Esophagus squamous epithelium (tissue), 5 donors: ENCODE measurements at regions of chr2 and their contacts with region 1.

Region 1: DNA sequence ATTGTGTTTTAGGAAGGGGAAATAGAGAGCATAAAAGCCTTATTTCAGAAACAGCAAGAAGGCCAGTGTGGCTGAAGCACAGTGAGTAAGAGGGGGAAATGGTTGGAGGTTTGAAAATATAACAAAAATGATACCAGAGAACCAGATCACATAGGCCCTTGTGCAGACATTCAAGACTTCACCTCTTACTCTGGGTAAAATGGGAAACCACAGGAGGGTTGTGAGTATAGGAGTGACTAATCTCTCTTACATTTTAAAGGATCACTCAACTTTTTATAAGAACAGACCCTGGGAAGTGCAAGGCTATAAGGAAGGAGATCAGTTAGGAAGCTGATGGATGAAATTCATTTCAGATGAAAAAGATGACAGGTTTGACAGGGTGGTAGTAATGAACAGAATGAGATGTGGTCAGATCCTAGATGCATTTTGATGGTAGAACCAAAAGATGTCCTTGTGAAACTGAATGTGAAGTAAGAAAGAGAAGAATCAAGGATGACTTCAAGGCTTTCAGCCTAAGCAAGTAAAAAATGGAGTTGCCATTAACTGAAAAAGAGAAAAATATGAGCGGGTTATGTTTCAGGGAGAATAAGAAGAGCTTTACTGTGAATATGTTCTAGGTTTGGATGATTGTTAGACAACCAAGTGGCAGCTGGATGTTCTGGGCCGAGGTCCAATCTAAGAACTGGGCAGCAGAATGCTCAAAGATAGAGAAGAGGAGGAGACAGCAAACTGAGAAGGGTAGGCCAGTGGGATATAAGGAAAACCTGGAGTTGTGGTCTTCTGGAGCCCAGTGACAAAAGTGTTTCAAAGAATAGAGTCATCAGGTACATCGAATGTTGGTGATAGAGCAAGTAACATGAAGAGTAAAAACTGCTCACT is 65.1 kb downstream of the USP40 start:
- DNase-seq: no peak
- H3K4me3 ChIP-seq: no peak overlapping the region
- H3K27ac ChIP-seq: no peak overlapping the region
- H3K4me1 ChIP-seq: no peaks in the 10 kb centered on the region
- H3K27me3 ChIP-seq: no peaks in the 10 kb centered on the region
- CTCF ChIP-seq: no peak
- POLR2A ChIP-seq: no peak

Region 2: GRCh38 chr2:233556756-233557736 is 55.6 kb after region 1 on chr2:
- intact Hi-C with region 1: loop called (anchors 10 kb)
- DNase-seq: no peak
- H3K4me3 ChIP-seq: no peak overlapping the region
- H3K27ac ChIP-seq: peak overlapping the region; percentile 41 to 82 (median 74)
- H3K4me1 ChIP-seq: peaks cover 0 to 22% (median 9%) of the 10 kb centered on the region in 3 donors
- H3K27me3 ChIP-seq: no peaks in the 10 kb centered on the region
- CTCF ChIP-seq: no peak
- POLR2A ChIP-seq: no peak